Sigmoid colon (tissue), 7 donors: ENCODE measurements at regions of chr15 and their contacts with region 1.

Region 1: GRCh38 chr15:58070801-58071418 is 5.4 kb upstream of the ALDH1A2 start:
- DNase-seq: peak; percentile 67
- H3K4me3 ChIP-seq: no peak overlapping the region
- H3K27ac ChIP-seq: no peak overlapping the region
- H3K4me1 ChIP-seq: peaks cover 0 to 7% (median 5%) of the 10 kb centered on the region in 4 donors
- H3K27me3 ChIP-seq: peaks cover 4 to 24% (median 4%) of the 10 kb centered on the region in 3 donors
- CTCF ChIP-seq: peak; percentile 20 to 82 (median 65)
- EP300 ChIP-seq: no peak
- POLR2A ChIP-seq: no peak

Region 2: DNA sequence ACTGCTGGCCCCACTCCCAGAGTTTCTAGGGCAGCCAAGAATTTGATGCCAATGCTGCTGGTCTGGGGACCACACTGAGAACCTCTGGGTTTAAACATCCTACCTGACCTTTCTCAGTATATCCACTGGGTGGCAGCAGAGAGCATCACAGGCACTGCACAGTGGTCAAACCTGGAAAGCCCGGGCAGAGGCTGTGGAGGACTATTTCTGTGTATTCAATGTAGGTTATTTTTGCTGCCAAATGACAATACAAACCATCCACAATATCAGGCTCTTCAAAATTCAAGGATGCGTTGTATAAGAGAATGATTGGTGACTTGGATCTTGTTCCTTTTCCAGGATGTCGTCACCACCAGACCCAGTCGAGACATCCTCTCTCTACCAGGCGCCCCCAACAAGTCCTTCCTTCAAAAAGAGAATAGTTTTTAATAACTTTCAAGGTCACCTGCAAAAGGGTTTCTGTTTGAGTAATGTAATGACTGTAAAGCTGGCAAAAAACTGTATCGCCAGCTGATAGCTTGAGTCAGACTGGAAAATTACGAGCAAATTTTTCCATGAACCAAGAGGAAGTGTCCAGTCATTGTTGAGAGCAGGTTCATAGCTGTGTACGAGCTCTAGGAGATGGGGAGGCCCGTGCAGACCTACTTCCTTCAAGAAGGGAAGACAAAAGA is 509.7 kb before region 1 on chr15:
- intact Hi-C with region 1: loop called (anchors 10 kb)
- DNase-seq: peak; percentile 86
- H3K4me3 ChIP-seq: no peak overlapping the region
- H3K27ac ChIP-seq: peak overlapping the region in 3 of 4 donors; percentile 15 to 33 (median 23)
- H3K4me1 ChIP-seq: peaks cover 0 to 14% (median 10%) of the 10 kb centered on the region in 4 donors
- H3K27me3 ChIP-seq: no peaks in the 10 kb centered on the region
- CTCF ChIP-seq: peak; percentile 60 to 94 (median 91)
- EP300 ChIP-seq: no peak
- POLR2A ChIP-seq: no peak

Region 3: GRCh38 chr15:57667171-57667849 is 403.6 kb before region 1 on chr15:
- intact Hi-C with region 1: loop called (anchors 10 kb)
- DNase-seq: no peak
- H3K4me3 ChIP-seq: no peak overlapping the region
- H3K27ac ChIP-seq: peak overlapping the region in 2 of 4 donors; percentile 38 to 61
- H3K4me1 ChIP-seq: peaks cover 0 to 15% (median 9%) of the 10 kb centered on the region in 4 donors
- H3K27me3 ChIP-seq: no peaks in the 10 kb centered on the region
- CTCF ChIP-seq: peak in 2 of 4 experiments; percentile 15 to 48
- EP300 ChIP-seq: no peak
- POLR2A ChIP-seq: no peak

Region 4: DNA sequence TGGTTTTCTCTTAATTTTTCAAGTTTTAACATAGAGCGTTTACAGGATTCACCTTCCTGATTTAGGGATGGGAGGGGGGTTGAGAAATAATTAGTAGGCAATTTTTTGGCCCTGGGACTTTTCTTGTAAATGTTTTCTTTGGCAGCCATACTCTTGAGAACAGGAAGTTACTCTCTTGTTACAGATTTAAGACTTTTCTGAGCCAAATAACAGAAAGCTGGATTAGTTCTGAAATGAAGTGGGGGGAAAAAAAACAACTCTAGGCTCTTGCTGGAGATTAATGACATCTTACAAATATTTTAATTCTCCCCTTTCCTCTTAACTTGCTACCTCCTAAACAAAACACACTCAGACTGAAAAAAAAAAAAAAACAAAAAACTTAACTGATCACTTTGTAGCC is 378.2 kb before region 1 on chr15:
- intact Hi-C with region 1: no loop called
- DNase-seq: no peak
- H3K4me3 ChIP-seq: no peak overlapping the region
- H3K27ac ChIP-seq: no peak overlapping the region
- H3K4me1 ChIP-seq: peaks cover 0 to 19% (median 10%) of the 10 kb centered on the region in 4 donors
- H3K27me3 ChIP-seq: no peaks in the 10 kb centered on the region
- CTCF ChIP-seq: no peak
- EP300 ChIP-seq: no peak
- POLR2A ChIP-seq: no peak

Region 5: DNA sequence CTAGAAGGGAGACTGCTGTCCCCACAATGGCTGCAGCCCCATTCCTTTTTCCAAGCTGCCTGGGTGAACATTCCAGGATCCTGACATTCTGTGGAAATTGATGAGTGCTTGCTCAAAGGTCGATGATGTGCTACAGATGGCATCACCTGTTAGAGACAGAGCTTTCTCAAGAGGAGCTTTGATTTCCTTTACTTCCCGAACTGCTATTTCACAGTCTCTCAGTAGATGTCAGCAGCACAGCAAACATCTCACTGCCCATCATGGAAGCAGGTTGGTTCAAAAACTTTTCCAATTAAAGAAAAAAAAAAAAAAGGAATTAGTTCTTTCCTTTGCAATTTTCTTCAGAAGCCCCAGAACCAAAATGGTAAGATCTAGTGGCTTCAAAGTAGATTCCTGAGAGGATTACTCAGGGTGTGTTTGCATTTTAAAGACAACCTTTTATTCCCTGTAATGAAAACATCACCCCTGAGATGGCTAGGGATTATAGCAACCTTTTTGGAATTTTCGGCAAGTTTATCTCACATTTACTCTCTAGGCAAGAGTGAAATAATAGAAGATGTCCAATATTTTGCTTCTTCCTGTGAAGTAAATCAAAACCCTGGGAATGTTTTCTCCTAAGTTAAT is 319.6 kb before region 1 on chr15:
- intact Hi-C with region 1: loop called (anchors 5 kb)
- DNase-seq: no peak
- H3K4me3 ChIP-seq: no peak overlapping the region
- H3K27ac ChIP-seq: peak overlapping the region in 2 of 4 donors; percentile 63 to 72
- H3K4me1 ChIP-seq: peaks cover 0 to 23% (median 13%) of the 10 kb centered on the region in 4 donors
- H3K27me3 ChIP-seq: no peaks in the 10 kb centered on the region
- CTCF ChIP-seq: peak in 3 of 4 experiments; percentile 18 to 46 (median 19)
- EP300 ChIP-seq: no peak
- POLR2A ChIP-seq: no peak

Region 6: GRCh38 chr15:57867970-57868798 is 202.7 kb before region 1 on chr15:
- intact Hi-C with region 1: loop called (anchors 2 kb)
- DNase-seq: no peak
- H3K4me3 ChIP-seq: no peak overlapping the region
- H3K27ac ChIP-seq: no peak overlapping the region
- H3K4me1 ChIP-seq: no peaks in the 10 kb centered on the region
- H3K27me3 ChIP-seq: no peaks in the 10 kb centered on the region
- CTCF ChIP-seq: no peak
- EP300 ChIP-seq: no peak
- POLR2A ChIP-seq: no peak

Region 7: DNA sequence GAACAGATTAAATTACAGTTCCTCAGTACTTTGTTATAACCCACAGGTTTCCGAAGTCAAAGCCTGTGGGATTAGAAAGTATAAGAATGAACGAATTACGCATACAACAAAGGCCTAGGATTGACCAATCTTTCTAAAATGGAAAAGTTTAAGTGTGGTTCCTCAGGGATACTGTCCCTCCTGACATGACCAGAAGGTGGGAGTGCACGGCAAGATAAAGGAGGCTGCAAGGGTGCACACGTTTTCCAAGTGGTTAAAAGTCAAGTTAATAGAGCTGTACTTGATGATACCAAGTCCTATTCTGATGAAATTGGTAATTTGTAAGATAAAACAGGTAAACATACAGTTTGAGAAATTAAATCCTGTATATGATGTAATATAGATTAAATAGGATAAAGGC is 101.6 kb before region 1 on chr15:
- intact Hi-C with region 1: loop called (anchors 2 kb)
- DNase-seq: no peak
- H3K4me3 ChIP-seq: no peak overlapping the region
- H3K27ac ChIP-seq: no peak overlapping the region
- H3K4me1 ChIP-seq: no peaks in the 10 kb centered on the region
- H3K27me3 ChIP-seq: no peaks in the 10 kb centered on the region
- CTCF ChIP-seq: no peak
- EP300 ChIP-seq: no peak
- POLR2A ChIP-seq: no peak